ENCODE measurements at regions of chr22 and their contacts with region 1.

Region 1: DNA sequence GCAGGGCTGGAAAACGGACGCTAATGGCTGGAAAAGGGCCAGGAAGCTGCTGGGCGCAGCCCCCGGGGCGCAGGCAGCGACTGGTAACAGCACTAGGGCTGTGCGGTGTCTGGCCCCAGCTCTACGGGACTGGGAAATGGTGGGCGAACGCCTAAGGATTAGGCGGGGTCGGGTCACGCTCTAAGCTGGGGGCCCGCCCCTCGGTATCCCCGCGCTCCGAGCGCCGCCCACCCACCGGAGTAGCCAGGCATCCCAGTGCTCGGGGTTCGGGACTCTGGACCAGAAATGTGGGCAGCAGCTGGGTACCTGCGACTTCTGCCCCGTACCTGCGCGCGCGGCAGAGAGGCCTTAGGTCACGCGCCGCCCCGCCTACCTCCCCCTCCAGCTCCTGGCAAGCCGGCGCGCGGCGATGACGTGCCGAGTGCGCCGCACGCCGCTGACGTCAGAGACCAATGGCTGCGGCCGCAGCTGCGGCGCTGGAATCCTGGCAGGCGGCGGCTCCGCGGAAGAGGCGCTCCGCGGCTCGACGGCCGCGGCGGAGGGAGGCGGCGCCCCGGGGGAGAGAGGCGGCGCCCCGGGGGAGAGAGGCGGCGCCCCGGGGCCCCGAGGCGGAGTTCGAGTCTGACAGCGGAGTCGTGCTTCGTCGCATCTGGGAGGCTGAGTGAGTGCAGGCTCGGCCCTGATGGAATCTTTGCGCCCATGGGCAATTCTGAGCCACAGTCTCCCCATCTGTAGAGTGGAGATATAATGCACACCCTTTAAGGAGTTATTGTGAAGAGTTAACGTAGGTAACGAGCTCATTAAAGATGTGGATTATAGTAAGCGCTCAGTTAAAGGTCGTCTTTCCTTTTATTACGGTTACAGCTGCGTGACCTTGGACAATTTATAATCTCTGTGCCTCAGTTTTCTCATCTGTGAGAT is at the starts of genes HPS4 and SRRD:
- DNase-seq: peak; percentile 95
- ATAC-seq: peak; percentile 75
- H3K4me3 Mint-ChIP-seq: peak within 1 kb of the TSS; percentile 82
- H3K27ac Mint-ChIP-seq: peak within 1 kb of the TSS; percentile 95
- H3K4me1 Mint-ChIP-seq: peaks cover 66% of the 10 kb centered on the region
- H3K27me3 Mint-ChIP-seq: no peaks in the 10 kb centered on the region
- total RNA-seq, gene HPS4: 49.3 to 60.9 TPM
- total RNA-seq, gene SRRD: 17.5 to 28.5 TPM

Region 2: DNA sequence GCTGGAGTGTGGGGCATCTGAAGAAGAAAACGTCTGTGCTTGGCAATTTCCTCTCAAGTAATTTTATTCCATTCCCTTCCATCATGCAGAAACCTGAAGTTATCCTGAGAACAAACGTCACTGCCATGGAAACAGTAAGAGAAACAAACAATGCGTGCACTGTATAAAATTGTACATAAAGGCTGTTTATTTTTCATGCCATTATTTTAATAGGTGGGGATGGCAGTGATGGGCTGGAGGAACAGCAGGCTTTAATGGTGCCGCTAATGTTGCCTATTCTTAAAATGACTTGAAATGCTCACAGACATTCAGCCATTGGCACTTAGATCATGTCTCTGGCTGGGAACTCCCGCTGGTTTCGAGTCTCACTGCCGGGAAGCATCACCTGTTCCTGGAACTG is 322.0 kb before region 1 on chr22:
- CTCF ChIA-PET with region 1: no interaction called
- POLR2A ChIA-PET with region 1: no interaction called
- intact Hi-C with region 1: no loop called
- DNase-seq: no peak
- ATAC-seq: no peak
- H3K4me3 Mint-ChIP-seq: no peak overlapping the region
- H3K27ac Mint-ChIP-seq: no peak overlapping the region
- H3K4me1 Mint-ChIP-seq: no peaks in the 10 kb centered on the region
- H3K27me3 Mint-ChIP-seq: peaks cover 14% of the 10 kb centered on the region

Region 3: DNA sequence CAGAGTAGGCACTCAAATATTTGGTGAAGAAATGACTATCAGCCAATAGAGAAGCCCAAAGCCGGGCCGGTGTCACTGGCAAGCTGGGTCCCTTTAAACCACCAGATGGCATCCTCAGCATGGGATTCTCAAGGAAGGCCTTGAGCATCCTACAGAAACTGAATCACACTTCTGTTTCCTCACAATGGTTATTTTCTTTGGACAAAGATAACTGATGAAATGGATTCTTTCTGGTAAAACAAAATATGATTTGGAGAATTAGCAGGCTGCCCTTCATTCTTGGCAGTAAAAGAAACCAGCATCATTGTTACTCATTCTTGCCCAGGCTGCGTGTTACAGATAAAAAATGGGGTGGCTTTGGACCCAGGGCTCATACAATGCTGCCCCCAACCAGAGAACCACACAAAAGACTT is 85.0 kb before region 1 on chr22:
- CTCF ChIA-PET with region 1: interaction called, 4 read pairs
- POLR2A ChIA-PET with region 1: no interaction called
- intact Hi-C with region 1: loop called in 1 of 2 experiments (anchors 1 kb)
- DNase-seq: peak; percentile 82
- ATAC-seq: peak; percentile 94
- H3K4me3 Mint-ChIP-seq: no peak overlapping the region
- H3K27ac Mint-ChIP-seq: no peak overlapping the region
- H3K4me1 Mint-ChIP-seq: peaks cover 2% of the 10 kb centered on the region
- H3K27me3 Mint-ChIP-seq: peaks cover 4% of the 10 kb centered on the region

Region 4: DNA sequence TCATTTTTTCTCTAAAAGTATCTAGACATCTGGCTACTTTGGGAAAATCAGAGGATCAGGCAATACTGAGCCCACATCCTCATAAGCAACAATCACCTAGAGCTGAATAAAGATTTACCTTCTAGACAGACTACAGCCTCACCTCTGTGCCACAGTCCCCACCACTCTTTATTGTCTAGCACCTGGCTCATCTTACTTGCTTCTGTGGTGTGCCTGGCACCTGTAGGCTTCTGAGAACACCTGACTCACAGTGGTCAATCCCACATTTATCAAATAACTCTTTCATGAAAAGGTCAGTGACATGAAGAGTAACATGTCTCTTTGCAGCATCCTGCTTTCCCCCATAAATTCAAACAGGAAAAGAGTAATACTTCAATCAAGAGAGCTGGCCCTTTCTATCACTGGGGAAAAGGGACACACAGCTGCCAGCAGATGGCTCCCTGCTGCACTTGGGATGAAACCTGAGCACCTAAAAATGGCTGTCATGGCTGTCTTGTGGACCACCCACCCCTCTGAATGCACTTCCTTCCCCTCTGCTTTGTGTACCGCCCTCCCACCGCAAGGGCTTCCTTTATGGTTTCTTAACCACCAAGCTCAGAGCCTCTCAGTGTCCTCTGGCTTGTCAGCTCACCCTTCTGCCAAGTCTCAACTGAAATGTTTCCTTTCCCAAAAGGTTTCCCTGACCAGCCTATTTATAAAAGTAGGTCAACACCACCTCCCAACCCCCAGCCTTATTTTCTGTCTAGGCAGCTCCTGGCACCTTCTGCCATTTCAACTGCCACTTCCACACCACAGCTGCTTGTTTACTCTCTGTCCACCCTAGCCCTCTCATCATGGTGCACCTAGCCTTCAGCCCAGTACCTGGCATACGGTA is 19.2 kb after region 1 on chr22:
- CTCF ChIA-PET with region 1: interaction called, 27 read pairs
- POLR2A ChIA-PET with region 1: interaction called, 3 read pairs
- intact Hi-C with region 1: no loop called
- DNase-seq: peak; percentile 72
- ATAC-seq: peak; percentile 93
- H3K4me3 Mint-ChIP-seq: no peak overlapping the region
- H3K27ac Mint-ChIP-seq: peak overlapping the region; percentile 84
- H3K4me1 Mint-ChIP-seq: peaks cover 18% of the 10 kb centered on the region
- H3K27me3 Mint-ChIP-seq: no peaks in the 10 kb centered on the region

Region 5: DNA sequence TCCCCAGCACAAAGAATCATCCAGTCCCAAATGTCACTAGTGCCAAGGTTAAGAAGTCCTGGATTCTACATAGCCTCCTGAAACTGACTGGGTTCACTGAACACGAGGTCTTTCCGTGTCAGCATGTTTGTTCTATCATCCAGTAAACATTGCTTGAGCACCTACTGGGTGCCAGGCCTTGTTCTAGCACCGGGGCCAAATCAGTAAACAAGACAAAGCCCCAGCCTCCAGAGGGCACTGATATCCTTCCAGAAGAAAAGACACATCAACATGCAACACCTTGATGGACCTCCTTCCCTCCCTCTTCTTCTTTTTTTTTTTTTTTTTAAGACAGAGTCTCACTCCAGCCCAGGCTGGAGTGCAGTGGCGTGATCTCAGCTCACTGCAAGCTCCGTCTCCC is 79.3 kb after region 1 on chr22:
- CTCF ChIA-PET with region 1: no interaction called
- POLR2A ChIA-PET with region 1: no interaction called
- intact Hi-C with region 1: no loop called
- DNase-seq: peak; percentile 20
- ATAC-seq: no peak
- H3K4me3 Mint-ChIP-seq: no peak overlapping the region
- H3K27ac Mint-ChIP-seq: no peak overlapping the region
- H3K4me1 Mint-ChIP-seq: peaks cover 2% of the 10 kb centered on the region
- H3K27me3 Mint-ChIP-seq: no peaks in the 10 kb centered on the region

Region 6: GRCh38 chr22:26589845-26590736 is 106.4 kb after region 1 on chr22 and contains the start of gene TPST2:
- CTCF ChIA-PET with region 1: interaction called, 3 read pairs
- POLR2A ChIA-PET with region 1: no interaction called
- intact Hi-C with region 1: loop called in 1 of 2 experiments (anchors 1 kb)
- DNase-seq: peak; percentile 87
- ATAC-seq: peak; percentile 84
- H3K4me3 Mint-ChIP-seq: peak within 1 kb of the TSS; percentile 90
- H3K27ac Mint-ChIP-seq: peak within 1 kb of the TSS; percentile 86
- H3K4me1 Mint-ChIP-seq: peaks cover 47% of the 10 kb centered on the region
- H3K27me3 Mint-ChIP-seq: no peaks in the 10 kb centered on the region
- total RNA-seq, gene TPST2: 17.4 to 18.3 TPM

Region 7: GRCh38 chr22:26658671-26659478 is 175.2 kb after region 1 on chr22:
- CTCF ChIA-PET with region 1: interaction called, 3 read pairs
- POLR2A ChIA-PET with region 1: no interaction called
- intact Hi-C with region 1: loop called in 1 of 2 experiments (anchors 1 kb)
- DNase-seq: peak; percentile 92
- ATAC-seq: peak; percentile 88
- H3K4me3 Mint-ChIP-seq: peak overlapping the region; percentile 81
- H3K27ac Mint-ChIP-seq: peak overlapping the region; percentile 82
- H3K4me1 Mint-ChIP-seq: peaks cover 23% of the 10 kb centered on the region
- H3K27me3 Mint-ChIP-seq: peaks cover 8% of the 10 kb centered on the region

Region 8: DNA sequence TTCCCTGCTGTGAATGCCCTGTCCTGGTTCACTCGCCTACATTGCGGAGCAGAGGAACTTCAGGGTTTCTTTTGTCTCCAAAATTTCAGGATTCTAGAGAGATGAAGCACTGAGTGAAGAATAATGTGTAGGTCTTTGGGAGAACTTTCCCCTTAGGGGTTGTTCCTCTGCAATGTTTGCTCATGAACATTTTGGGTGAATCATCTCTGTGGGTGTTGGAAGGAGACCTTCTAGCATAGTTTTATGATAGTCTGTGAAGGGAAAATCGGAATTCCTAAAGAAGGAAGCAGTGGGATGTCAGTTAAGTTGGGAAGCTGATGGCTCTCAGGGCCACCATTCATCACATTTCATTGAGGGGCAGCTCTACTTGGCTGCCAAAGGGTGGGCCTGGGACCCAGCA is 238.5 kb after region 1 on chr22:
- CTCF ChIA-PET with region 1: no interaction called
- POLR2A ChIA-PET with region 1: no interaction called
- intact Hi-C with region 1: no loop called
- DNase-seq: no peak
- ATAC-seq: no peak
- H3K4me3 Mint-ChIP-seq: no peak overlapping the region
- H3K27ac Mint-ChIP-seq: no peak overlapping the region
- H3K4me1 Mint-ChIP-seq: no peaks in the 10 kb centered on the region
- H3K27me3 Mint-ChIP-seq: no peaks in the 10 kb centered on the region

Region 9: GRCh38 chr22:26848244-26848920 is 364.7 kb after region 1 on chr22:
- CTCF ChIA-PET with region 1: no interaction called
- POLR2A ChIA-PET with region 1: no interaction called
- intact Hi-C with region 1: no loop called
- DNase-seq: no peak
- ATAC-seq: no peak
- H3K4me3 Mint-ChIP-seq: no peak overlapping the region
- H3K27ac Mint-ChIP-seq: no peak overlapping the region
- H3K4me1 Mint-ChIP-seq: no peaks in the 10 kb centered on the region
- H3K27me3 Mint-ChIP-seq: no peaks in the 10 kb centered on the region